B cell (primary cell): ENCODE measurements at regions of chr5 and their contacts with region 1.

Region 1: GRCh38 chr5:150350524-150351344 is 6.8 kb upstream of the TCOF1 start:
- DNase-seq: peak; percentile 58
- ATAC-seq: peak; percentile 80
- H3K4me3 ChIP-seq: no peak overlapping the region
- H3K4me3 Mint-ChIP-seq: no peak overlapping the region
- H3K27ac ChIP-seq: no peak overlapping the region
- H3K27ac Mint-ChIP-seq: peak overlapping the region; percentile 51
- H3K4me1 ChIP-seq: peaks cover 8% of the 10 kb centered on the region in 2 donors
- H3K4me1 Mint-ChIP-seq: peaks cover 7% of the 10 kb centered on the region
- H3K27me3 ChIP-seq: no peaks in the 10 kb centered on the region
- H3K27me3 Mint-ChIP-seq: no peaks in the 10 kb centered on the region
- CTCF ChIP-seq: no peak

Region 2: DNA sequence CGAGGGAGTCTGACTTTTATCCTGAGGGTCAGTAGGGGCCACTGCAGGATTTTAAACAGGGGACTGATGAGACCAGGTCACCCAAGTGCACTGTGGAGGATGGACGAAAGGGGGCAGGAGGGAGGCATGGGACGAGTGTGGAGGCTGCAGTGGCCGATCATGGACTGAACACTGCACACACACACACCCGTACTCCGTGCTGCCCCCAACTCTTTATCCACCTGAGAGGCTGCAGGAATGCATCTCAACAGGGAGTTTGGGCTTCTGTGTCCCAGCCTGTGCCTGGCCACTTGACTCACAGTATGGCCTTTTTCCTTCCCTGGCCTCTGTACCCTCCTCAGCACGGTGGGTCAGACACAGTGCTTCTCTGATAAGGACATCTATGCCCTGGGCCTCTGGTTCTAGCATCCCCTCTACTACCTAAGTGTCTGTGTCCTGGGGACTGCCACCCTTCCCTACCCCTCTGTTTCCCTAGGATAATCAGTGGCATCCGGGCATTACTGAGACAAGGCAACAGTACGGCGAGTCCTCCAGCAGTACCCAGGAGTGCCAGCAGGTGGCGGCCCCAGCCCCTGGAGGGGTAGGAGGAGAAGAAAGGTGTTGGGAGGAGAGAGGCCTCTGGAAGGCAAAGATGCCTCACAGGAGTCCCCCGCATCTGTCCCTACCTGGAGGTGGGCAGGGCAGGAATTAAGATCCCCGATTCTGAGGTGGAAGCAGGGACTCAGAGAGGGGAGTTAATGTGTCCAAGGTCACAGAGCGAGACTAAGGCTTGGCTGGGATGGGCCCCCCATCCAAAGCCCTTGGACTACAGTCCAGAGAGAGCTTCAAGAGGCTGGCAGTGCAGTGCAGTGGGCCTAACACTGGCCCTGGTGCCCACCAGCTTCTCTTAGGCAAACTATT is 189.2 kb before region 1 on chr5:
- CTCF ChIA-PET with region 1: interaction called, 11 read pairs
- POLR2A ChIA-PET with region 1: no interaction called
- intact Hi-C with region 1: no loop called
- DNase-seq: peak; percentile 70
- ATAC-seq: peak; percentile 82
- H3K4me3 ChIP-seq: no peak overlapping the region
- H3K4me3 Mint-ChIP-seq: no peak overlapping the region
- H3K27ac ChIP-seq: no peak overlapping the region
- H3K27ac Mint-ChIP-seq: peak overlapping the region; percentile 17
- H3K4me1 ChIP-seq: peaks cover 7 to 13% of the 10 kb centered on the region in 2 donors
- H3K4me1 Mint-ChIP-seq: peaks cover 16% of the 10 kb centered on the region
- H3K27me3 ChIP-seq: peaks cover 0 to 6% (median 2%) of the 10 kb centered on the region in 4 experiments
- H3K27me3 Mint-ChIP-seq: peaks cover 12% of the 10 kb centered on the region
- CTCF ChIP-seq: peak; percentile 94